ENCODE measurements at regions of chr12 and their contacts with region 1.

Region 1: GRCh38 chr12:106126441-106127337 is 12.1 kb downstream of the NUAK1 start:
- DNase-seq: peak; percentile 62
- H3K4me3 ChIP-seq: no peak overlapping the region
- H3K27ac ChIP-seq: peak overlapping the region in 3 of 4 donors; percentile 13 to 61 (median 42)
- H3K4me1 ChIP-seq: peaks cover 0 to 43% (median 36%) of the 10 kb centered on the region in 4 donors
- H3K27me3 ChIP-seq: no peaks in the 10 kb centered on the region
- CTCF ChIP-seq: no peak
- EP300 ChIP-seq: no peak
- POLR2A ChIP-seq: no peak

Region 2: GRCh38 chr12:105986779-105987684 is 139.7 kb before region 1 on chr12:
- intact Hi-C with region 1: no loop called
- DNase-seq: no peak
- H3K4me3 ChIP-seq: no peak overlapping the region
- H3K27ac ChIP-seq: no peak overlapping the region
- H3K4me1 ChIP-seq: no peaks in the 10 kb centered on the region
- H3K27me3 ChIP-seq: no peaks in the 10 kb centered on the region
- CTCF ChIP-seq: no peak
- EP300 ChIP-seq: no peak
- POLR2A ChIP-seq: no peak

Region 3: GRCh38 chr12:106088811-106089485 is 37.7 kb before region 1 on chr12:
- intact Hi-C with region 1: loop called (anchors 5 kb)
- DNase-seq: no peak
- H3K4me3 ChIP-seq: no peak overlapping the region
- H3K27ac ChIP-seq: peak overlapping the region in 3 of 4 donors; percentile 19 to 82 (median 80)
- H3K4me1 ChIP-seq: peaks cover 0 to 47% (median 37%) of the 10 kb centered on the region in 4 donors
- H3K27me3 ChIP-seq: no peaks in the 10 kb centered on the region
- CTCF ChIP-seq: no peak
- EP300 ChIP-seq: no peak
- POLR2A ChIP-seq: no peak